Right ventricle myocardium superior (tissue), 1 donor: ENCODE measurements at regions of chr1 and their contacts with region 1.

Region 1: GRCh38 chr1:113835642-113836307 is 23.5 kb upstream of the RSBN1 start:
- DNase-seq: no peak
- ATAC-seq: no peak

Region 2: GRCh38 chr1:113904674-113905434 is 69.1 kb after region 1 on chr1 and contains the starts of genes AP4B1 and DCLRE1B:
- intact Hi-C with region 1: loop called (anchors 10 kb)
- DNase-seq: peak; percentile 100
- ATAC-seq: peak; percentile 98
- total RNA-seq, gene AP4B1: 11.4 TPM
- total RNA-seq, gene DCLRE1B: 2.2 TPM